Activated CD4-positive, alpha-beta memory T cell treated with anti-CD3 and anti-CD28 coated beads, Interleukin-2, amount 10 ng/mL, durations not matched to agents 7 days and 5 days (primary cell): ENCODE measurements at regions of chr14 and their contacts with region 1.

Region 1: DNA sequence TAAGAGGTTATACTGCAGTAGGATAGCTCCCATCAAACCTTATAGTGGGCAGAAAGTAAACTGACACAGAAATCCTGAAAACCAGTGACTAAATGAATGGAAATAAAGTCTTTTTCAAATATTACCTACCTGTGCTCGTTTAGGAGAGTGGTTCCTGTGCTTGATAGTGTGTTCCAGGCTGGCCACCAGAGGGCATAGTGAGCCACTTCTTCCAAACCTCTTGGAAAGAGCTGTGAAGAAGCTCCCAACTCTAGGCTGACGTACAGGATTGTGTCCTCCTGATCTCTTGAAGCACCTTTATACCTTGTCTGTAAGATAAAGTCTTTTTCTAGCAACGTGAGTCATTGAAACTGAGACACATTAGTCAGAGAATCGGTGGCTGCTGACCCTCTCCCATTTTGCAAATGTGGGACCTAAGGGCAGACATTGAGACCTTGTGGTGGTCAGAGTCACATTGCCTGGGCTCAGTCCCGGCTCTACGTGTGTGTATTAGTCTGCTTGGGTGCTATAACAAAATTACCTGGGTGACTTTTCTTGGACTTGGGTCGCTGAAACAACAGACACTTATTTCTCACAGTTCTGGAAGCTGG is 17.6 kb downstream of the TDP1 start:
- DNase-seq: peak; percentile 65
- H3K4me3 Mint-ChIP-seq: no peak overlapping the region
- H3K27ac Mint-ChIP-seq: no peak overlapping the region
- H3K4me1 Mint-ChIP-seq: peaks cover 1% of the 10 kb centered on the region
- H3K27me3 Mint-ChIP-seq: no peaks in the 10 kb centered on the region

Region 2: GRCh38 chr14:89736867-89737266 is 236.5 kb before region 1 on chr14:
- CTCF ChIA-PET with region 1: no interaction called
- POLR2A ChIA-PET with region 1: no interaction called
- DNase-seq: no peak
- H3K4me3 Mint-ChIP-seq: no peak overlapping the region
- H3K27ac Mint-ChIP-seq: no peak overlapping the region
- H3K4me1 Mint-ChIP-seq: no peaks in the 10 kb centered on the region
- H3K27me3 Mint-ChIP-seq: peaks cover 3% of the 10 kb centered on the region

Region 3: DNA sequence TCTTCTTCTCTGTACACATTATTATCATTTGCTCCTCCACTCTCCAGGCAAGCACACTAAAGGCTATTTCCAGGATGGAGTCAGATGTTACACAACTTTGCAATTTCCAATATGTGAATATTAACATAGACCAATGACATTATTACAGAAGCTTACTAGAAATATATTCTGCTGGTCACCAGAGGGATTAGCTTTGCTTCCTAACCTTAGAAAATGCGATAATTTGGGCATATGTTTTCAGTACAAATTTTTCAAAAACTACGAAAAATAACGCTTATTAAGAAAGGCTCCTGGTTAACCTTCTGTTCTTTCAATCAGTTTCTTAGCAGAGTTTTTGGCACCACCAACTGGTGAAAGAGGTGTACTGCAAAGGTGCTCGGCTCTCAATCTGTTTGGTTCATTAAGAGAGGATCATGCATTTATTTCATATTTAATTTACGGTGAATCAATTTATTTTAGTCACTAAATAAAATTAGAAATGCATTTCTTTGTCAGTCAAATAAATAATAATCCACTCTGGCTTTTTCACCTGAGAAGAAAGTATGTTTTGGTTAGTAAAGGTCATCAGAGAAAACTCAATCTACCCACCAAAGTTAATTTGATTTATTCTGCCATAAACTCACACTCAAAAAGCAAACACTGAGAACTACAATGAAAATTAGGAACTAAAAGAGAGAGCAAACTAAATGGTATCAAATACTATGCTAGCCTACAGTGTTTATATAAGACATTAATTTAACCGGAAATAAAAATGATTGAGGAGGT is 58.0 kb before region 1 on chr14:
- CTCF ChIA-PET with region 1: no interaction called
- POLR2A ChIA-PET with region 1: no interaction called
- DNase-seq: peak; percentile 59
- H3K4me3 Mint-ChIP-seq: no peak overlapping the region
- H3K27ac Mint-ChIP-seq: no peak overlapping the region
- H3K4me1 Mint-ChIP-seq: peaks cover 2% of the 10 kb centered on the region
- H3K27me3 Mint-ChIP-seq: peaks cover 7% of the 10 kb centered on the region

Region 4: DNA sequence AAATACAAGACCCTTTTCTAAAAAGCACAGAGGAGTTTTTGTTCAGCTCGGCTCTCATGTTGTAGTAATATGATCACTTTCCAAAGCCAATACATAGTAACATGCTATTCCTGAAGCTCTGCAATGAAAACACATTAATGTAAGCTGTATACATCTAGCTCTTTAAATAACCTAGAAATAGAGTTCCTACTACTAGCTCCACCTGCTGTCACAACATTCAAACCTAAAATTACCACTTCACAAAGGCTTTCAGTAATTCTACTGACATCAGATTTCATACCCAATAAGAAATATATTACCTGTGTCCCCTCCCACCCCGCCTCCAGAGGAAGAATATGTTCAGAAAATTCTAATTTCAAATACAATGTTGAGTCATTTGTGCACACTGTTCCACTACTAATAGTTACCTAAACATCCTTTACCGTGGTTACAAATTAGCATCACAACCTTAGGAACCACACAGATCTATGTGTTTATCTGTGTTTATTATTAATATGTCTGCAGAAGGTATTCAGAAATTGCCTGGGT is 36.6 kb before region 1 on chr14:
- CTCF ChIA-PET with region 1: interaction called, 40 read pairs
- POLR2A ChIA-PET with region 1: no interaction called
- DNase-seq: no peak
- H3K4me3 Mint-ChIP-seq: no peak overlapping the region
- H3K27ac Mint-ChIP-seq: no peak overlapping the region
- H3K4me1 Mint-ChIP-seq: no peaks in the 10 kb centered on the region
- H3K27me3 Mint-ChIP-seq: no peaks in the 10 kb centered on the region

Region 5: DNA sequence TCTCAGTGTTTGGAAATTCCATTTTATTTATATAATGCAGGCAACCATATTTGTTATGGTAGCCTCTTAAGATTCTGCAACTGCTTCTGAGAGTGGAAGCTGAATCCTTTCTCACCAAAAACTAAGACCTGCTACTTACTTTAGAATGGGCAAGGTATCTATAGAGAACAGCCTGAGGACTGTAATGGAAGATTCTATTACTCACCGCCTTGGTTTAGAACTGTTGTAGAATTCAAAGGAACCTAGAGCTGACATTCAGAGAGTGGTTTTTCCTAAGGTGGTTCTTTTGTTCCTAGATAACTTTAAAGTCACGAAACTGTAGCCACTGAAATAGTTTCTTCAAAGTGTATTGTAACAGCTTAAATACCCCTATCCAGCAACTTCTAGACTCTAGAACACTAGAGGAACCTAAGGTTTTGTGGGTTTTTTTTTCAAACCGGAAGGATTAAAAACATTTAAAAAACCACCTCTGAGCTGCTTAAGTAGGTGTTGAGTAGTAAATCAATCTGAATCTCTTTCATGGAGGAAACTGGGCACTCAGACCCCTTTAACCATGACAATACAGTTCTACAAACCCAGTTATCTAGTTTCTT is 13.4 kb before region 1 on chr14:
- CTCF ChIA-PET with region 1: interaction called, 125 read pairs
- POLR2A ChIA-PET with region 1: interaction called, 33 read pairs
- DNase-seq: no peak
- H3K4me3 Mint-ChIP-seq: no peak overlapping the region
- H3K27ac Mint-ChIP-seq: peak overlapping the region; percentile 85
- H3K4me1 Mint-ChIP-seq: peaks cover 58% of the 10 kb centered on the region
- H3K27me3 Mint-ChIP-seq: no peaks in the 10 kb centered on the region

Region 6: GRCh38 chr14:89986462-89987160 is 13.3 kb after region 1 on chr14:
- CTCF ChIA-PET with region 1: interaction called, 13 read pairs
- POLR2A ChIA-PET with region 1: interaction called, 8 read pairs
- DNase-seq: no peak
- H3K4me3 Mint-ChIP-seq: no peak overlapping the region
- H3K27ac Mint-ChIP-seq: no peak overlapping the region
- H3K4me1 Mint-ChIP-seq: no peaks in the 10 kb centered on the region
- H3K27me3 Mint-ChIP-seq: no peaks in the 10 kb centered on the region

Region 7: GRCh38 chr14:90003908-90004307 is 30.6 kb after region 1 on chr14:
- CTCF ChIA-PET with region 1: interaction called, 12 read pairs
- POLR2A ChIA-PET with region 1: no interaction called
- DNase-seq: no peak
- H3K4me3 Mint-ChIP-seq: no peak overlapping the region
- H3K27ac Mint-ChIP-seq: no peak overlapping the region
- H3K4me1 Mint-ChIP-seq: peaks cover 24% of the 10 kb centered on the region
- H3K27me3 Mint-ChIP-seq: no peaks in the 10 kb centered on the region

Region 8: DNA sequence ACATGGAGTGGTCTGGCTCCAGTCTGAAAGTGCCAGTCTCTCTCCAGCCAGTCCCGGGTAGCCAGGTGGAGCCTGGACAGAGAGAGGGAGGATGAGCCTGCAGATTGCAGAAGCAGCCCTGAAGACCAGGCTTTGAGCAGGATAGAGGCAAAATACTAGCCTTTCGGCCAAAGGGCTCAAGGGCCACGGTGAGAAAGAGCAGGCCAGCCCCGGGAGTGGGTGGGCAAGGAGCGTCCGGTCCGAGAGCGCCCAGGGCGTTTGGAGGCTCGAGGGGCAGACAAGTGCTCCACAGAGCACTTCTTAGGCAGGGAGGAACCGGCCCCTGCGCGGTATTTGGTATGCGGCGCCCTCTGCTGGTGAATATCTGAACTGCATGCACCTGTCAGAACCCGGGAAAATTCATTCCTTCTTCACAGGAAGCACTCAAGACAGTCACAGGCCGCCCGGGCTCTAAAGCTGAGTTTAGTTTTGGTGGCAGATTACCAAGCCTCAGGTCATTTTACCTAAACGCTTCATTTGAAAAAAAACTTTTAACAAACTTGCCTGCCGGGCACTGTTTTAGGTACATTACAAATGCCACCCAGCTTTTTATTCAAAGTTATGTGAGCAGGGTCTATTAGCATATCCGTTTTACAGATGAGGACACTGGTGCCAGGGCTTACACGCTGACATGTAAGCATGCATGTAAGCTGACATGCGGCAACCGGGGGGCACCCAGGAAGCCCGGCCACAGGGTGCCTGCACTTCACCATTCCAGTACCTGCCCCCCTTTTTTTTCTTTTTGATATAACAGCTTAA is 262.0 kb after region 1 on chr14:
- CTCF ChIA-PET with region 1: interaction called, 32 read pairs
- POLR2A ChIA-PET with region 1: no interaction called
- DNase-seq: peak; percentile 73
- H3K4me3 Mint-ChIP-seq: no peak overlapping the region
- H3K27ac Mint-ChIP-seq: no peak overlapping the region
- H3K4me1 Mint-ChIP-seq: peaks cover 2% of the 10 kb centered on the region
- H3K27me3 Mint-ChIP-seq: peaks cover 8% of the 10 kb centered on the region